ENCODE measurements at regions of chr5 and their contacts with region 1.

Region 1: GRCh38 chr5:174951146-174951780 is 226.9 kb downstream of the MSX2 start:
- DNase-seq: peak in 1 of 2 donors; percentile 72
- H3K4me3 ChIP-seq: no peak overlapping the region
- H3K27ac ChIP-seq: no peak overlapping the region
- H3K4me1 ChIP-seq: no peaks in the 10 kb centered on the region
- H3K27me3 ChIP-seq: peaks cover 0 to 26% of the 10 kb centered on the region in 2 donors
- CTCF ChIP-seq: peak; percentile 80 to 84

Region 2: DNA sequence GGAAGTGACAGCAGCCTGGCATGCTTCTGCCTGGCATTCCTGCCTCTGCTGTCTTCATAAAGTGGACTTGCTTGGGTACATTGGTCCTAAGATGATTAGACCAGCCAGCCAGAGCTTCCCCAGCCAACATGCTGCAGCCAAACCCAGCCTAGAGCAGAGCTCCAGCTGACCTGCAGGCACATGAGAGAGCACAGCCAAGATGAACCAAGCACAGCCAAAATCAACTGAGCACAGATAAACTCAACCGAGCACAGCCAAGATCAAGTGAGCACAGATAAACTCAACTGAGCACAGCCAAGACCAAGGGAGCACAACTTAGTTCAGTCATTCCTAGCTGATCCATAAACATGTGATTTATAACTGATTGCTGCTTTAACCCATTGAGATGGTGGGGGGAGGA is 39.6 kb after region 1 on chr5:
- intact Hi-C with region 1: no loop called
- DNase-seq: peak; percentile 40 to 76
- H3K4me3 ChIP-seq: no peak overlapping the region
- H3K27ac ChIP-seq: peak overlapping the region in 1 of 2 donors; percentile 27
- H3K4me1 ChIP-seq: peaks cover 0 to 26% (median 11%) of the 10 kb centered on the region in 4 donors
- H3K27me3 ChIP-seq: peaks cover 0 to 6% of the 10 kb centered on the region in 2 donors
- CTCF ChIP-seq: no peak

Region 3: GRCh38 chr5:175444060-175444904 is 493.0 kb after region 1 on chr5 and contains the start of gene DRD1:
- intact Hi-C with region 1: loop called (anchors 2 kb)
- DNase-seq: no peak
- H3K4me3 ChIP-seq: peak within 1 kb of the TSS; percentile 51 to 55
- H3K27ac ChIP-seq: peak within 1 kb of the TSS in 1 of 2 donors; percentile 43
- H3K4me1 ChIP-seq: peaks cover 0 to 57% (median 20%) of the 10 kb centered on the region in 4 donors
- H3K27me3 ChIP-seq: peaks cover 0 to 15% of the 10 kb centered on the region in 2 donors
- CTCF ChIP-seq: peak; percentile 83 to 84

Measured in tibial artery (tissue), 4 donors.